Activated CD4-positive, alpha-beta T cell treated with anti-CD3 and anti-CD28 coated beads, Interleukin-2, amount 10 ng/mL, durations not matched to agents 24 days and 14 days (primary cell): ENCODE measurements at regions of chr7 and their contacts with region 1.

Region 1: GRCh38 chr7:28926871-28927597 is 31.1 kb downstream of the TRIL start:
- DNase-seq: peak; percentile 86
- H3K4me3 Mint-ChIP-seq: peak overlapping the region; percentile 83
- H3K27ac Mint-ChIP-seq: no peak overlapping the region
- H3K4me1 Mint-ChIP-seq: peaks cover 18% of the 10 kb centered on the region
- H3K27me3 Mint-ChIP-seq: peaks cover 21% of the 10 kb centered on the region

Region 2: GRCh38 chr7:29105752-29106668 is 179.0 kb after region 1 on chr7:
- intact Hi-C with region 1: loop called (anchors 1 kb)
- DNase-seq: peak; percentile 74
- H3K4me3 Mint-ChIP-seq: no peak overlapping the region
- H3K27ac Mint-ChIP-seq: no peak overlapping the region
- H3K4me1 Mint-ChIP-seq: peaks cover 3% of the 10 kb centered on the region
- H3K27me3 Mint-ChIP-seq: peaks cover 7% of the 10 kb centered on the region

Region 3: GRCh38 chr7:29189743-29190201 is 262.7 kb after region 1 on chr7:
- intact Hi-C with region 1: loop called (anchors 10 kb)
- DNase-seq: peak; percentile 82
- H3K4me3 Mint-ChIP-seq: no peak overlapping the region
- H3K27ac Mint-ChIP-seq: no peak overlapping the region
- H3K4me1 Mint-ChIP-seq: peaks cover 2% of the 10 kb centered on the region
- H3K27me3 Mint-ChIP-seq: peaks cover 43% of the 10 kb centered on the region

Region 4: GRCh38 chr7:29239638-29240037 is 312.6 kb after region 1 on chr7:
- intact Hi-C with region 1: loop called (anchors 10 kb)
- DNase-seq: peak; percentile 65
- H3K4me3 Mint-ChIP-seq: no peak overlapping the region
- H3K27ac Mint-ChIP-seq: no peak overlapping the region
- H3K4me1 Mint-ChIP-seq: peaks cover 13% of the 10 kb centered on the region
- H3K27me3 Mint-ChIP-seq: peaks cover 27% of the 10 kb centered on the region